OCI-LY7 (cell line): ENCODE measurements at regions of chr1 and their contacts with region 1.

Region 1: GRCh38 chr1:56709269-56709880 is 64.3 kb downstream of the PRKAA2 start:
- DNase-seq: peak; percentile 57
- H3K4me3 ChIP-seq: no peak overlapping the region
- H3K27ac ChIP-seq: no peak overlapping the region
- H3K4me1 ChIP-seq: no peaks in the 10 kb centered on the region
- CTCF ChIP-seq: peak; percentile 84

Region 2: GRCh38 chr1:55375617-55376258 is 1333.6 kb before region 1 on chr1:
- CTCF ChIA-PET with region 1: no interaction called
- POLR2A ChIA-PET with region 1: no interaction called
- intact Hi-C with region 1: loop called (anchors 5 kb)
- DNase-seq: peak; percentile 55
- H3K4me3 ChIP-seq: no peak overlapping the region
- H3K27ac ChIP-seq: no peak overlapping the region
- H3K4me1 ChIP-seq: no peaks in the 10 kb centered on the region
- CTCF ChIP-seq: peak; percentile 91

Region 3: DNA sequence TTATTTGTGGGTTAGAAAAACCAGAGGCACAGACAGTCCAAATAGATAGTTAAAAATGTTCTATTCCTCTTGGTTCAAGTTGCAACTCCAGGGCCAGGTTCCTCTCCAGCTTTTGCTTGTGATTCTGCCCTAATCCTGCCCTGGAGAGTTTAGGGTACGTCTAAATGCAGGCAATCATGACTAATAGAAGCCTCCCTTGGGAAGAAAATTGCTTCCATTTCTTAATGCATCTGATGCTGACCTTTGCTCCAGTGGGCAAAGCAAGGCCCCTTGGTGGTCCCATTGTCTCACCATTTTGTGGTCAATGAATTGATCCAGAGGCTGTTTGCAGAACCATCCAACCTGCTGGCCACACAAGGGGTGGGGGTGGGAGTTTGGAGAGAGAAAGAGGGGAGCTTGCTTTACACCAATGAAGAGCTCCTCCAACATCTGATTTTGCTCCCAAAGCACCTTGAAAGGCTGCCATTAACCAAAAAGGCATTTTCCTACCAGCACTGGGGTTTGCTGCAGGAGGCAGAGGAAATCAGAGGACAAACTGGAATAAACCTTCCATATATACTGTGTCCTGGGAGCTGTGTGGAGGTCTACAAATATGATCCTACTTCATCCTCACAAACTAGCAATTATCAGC is 225.2 kb after region 1 on chr1:
- CTCF ChIA-PET with region 1: no interaction called
- POLR2A ChIA-PET with region 1: no interaction called
- intact Hi-C with region 1: no loop called
- DNase-seq: no peak
- H3K4me3 ChIP-seq: no peak overlapping the region
- H3K27ac ChIP-seq: no peak overlapping the region
- H3K4me1 ChIP-seq: no peaks in the 10 kb centered on the region
- CTCF ChIP-seq: no peak